ENCODE measurements at regions of chr19 and their contacts with region 1.

Region 1: GRCh38 chr19:53424968-53425597 is 6.7 kb upstream of the ZNF761 start:
- DNase-seq: peak; percentile 38
- H3K4me3 ChIP-seq: no peak overlapping the region
- H3K27ac ChIP-seq: no peak overlapping the region
- H3K27me3 ChIP-seq: no peaks in the 10 kb centered on the region
- CTCF ChIP-seq: peak; percentile 75

Region 2: GRCh38 chr19:53455828-53456227 is 30.7 kb after region 1 on chr19:
- CTCF ChIA-PET with region 1: interaction called, 12 read pairs
- POLR2A ChIA-PET with region 1: no interaction called
- DNase-seq: no peak
- H3K4me3 ChIP-seq: no peak overlapping the region
- H3K27ac ChIP-seq: no peak overlapping the region
- H3K27me3 ChIP-seq: no peaks in the 10 kb centered on the region
- CTCF ChIP-seq: no peak

Measured in AG04450 (cell line).